ENCODE measurements at regions of chr18 and their contacts with region 1.

Region 1: GRCh38 chr18:77207540-77207939 is 42.1 kb upstream of the GALR1 start:
- DNase-seq: peak; percentile 53 to 69 (median 62)
- H3K4me3 ChIP-seq: no peak overlapping the region
- H3K4me3 Mint-ChIP-seq: no peak overlapping the region
- H3K27ac ChIP-seq: no peak overlapping the region
- H3K27ac Mint-ChIP-seq: peak overlapping the region; percentile 28 to 94 (median 64)
- H3K4me1 ChIP-seq: peaks cover 22 to 38% of the 10 kb centered on the region in 2 donors
- H3K4me1 Mint-ChIP-seq: peaks cover 44% of the 10 kb centered on the region
- H3K27me3 ChIP-seq: no peaks in the 10 kb centered on the region
- H3K27me3 Mint-ChIP-seq: peaks cover 0 to 2% (median 0%) of the 10 kb centered on the region in 3 donors
- CTCF ChIP-seq: peak; percentile 70

Region 2: DNA sequence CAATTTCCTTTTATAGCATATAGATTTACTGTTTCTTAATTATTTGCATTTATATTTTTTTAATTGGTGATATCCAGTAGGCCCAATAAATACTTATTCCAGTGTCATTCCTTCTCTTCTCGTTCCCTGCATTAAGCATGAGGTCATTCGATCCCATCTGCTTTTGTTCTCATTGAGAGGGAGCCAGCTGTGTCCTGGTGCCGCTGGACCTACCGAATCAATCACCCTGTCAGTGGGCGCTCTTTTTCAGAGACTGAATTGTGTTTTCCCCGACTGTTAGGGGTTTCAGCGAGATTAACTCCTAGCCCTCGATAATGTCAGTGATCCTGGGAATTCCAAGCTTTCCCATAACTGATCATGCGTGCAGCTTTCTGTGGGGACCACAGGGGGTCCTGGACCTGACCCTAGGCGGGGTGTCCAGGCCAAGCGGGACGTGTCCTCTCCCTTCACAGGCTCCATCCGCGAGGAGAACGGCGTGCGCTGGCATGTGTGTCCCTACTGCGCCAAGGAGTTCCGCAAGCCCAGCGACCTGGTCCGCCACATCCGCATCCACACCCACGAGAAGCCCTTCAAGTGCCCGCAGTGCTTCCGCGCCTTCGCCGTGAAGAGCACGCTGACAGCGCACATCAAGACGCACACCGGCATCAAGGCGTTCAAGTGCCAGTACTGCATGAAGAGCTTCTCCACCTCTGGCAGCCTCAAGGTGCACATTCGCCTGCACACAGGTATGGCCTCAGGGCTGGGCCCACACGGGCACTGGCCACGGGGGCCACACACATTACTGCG is 312.8 kb before region 1 on chr18:
- intact Hi-C with region 1: no loop called
- DNase-seq: no peak
- H3K4me3 ChIP-seq: no peak overlapping the region
- H3K4me3 Mint-ChIP-seq: no peak overlapping the region
- H3K27ac ChIP-seq: no peak overlapping the region
- H3K27ac Mint-ChIP-seq: no peak overlapping the region
- H3K4me1 ChIP-seq: no peaks in the 10 kb centered on the region
- H3K4me1 Mint-ChIP-seq: no peaks in the 10 kb centered on the region
- H3K27me3 ChIP-seq: no peaks in the 10 kb centered on the region
- H3K27me3 Mint-ChIP-seq: no peaks in the 10 kb centered on the region
- CTCF ChIP-seq: no peak

Region 3: GRCh38 chr18:77000527-77000926 is 207.0 kb before region 1 on chr18:
- intact Hi-C with region 1: loop called (anchors 5 kb)
- DNase-seq: peak; percentile 54 to 73 (median 67)
- H3K4me3 ChIP-seq: no peak overlapping the region
- H3K4me3 Mint-ChIP-seq: peak overlapping the region in 1 of 2 donors; percentile 35
- H3K27ac ChIP-seq: no peak overlapping the region
- H3K27ac Mint-ChIP-seq: peak overlapping the region in 4 of 7 donors; percentile 24 to 68 (median 44)
- H3K4me1 ChIP-seq: peaks cover 26 to 31% of the 10 kb centered on the region in 2 donors
- H3K4me1 Mint-ChIP-seq: peaks cover 27% of the 10 kb centered on the region
- H3K27me3 ChIP-seq: no peaks in the 10 kb centered on the region
- H3K27me3 Mint-ChIP-seq: no peaks in the 10 kb centered on the region
- CTCF ChIP-seq: peak; percentile 97

Region 4: DNA sequence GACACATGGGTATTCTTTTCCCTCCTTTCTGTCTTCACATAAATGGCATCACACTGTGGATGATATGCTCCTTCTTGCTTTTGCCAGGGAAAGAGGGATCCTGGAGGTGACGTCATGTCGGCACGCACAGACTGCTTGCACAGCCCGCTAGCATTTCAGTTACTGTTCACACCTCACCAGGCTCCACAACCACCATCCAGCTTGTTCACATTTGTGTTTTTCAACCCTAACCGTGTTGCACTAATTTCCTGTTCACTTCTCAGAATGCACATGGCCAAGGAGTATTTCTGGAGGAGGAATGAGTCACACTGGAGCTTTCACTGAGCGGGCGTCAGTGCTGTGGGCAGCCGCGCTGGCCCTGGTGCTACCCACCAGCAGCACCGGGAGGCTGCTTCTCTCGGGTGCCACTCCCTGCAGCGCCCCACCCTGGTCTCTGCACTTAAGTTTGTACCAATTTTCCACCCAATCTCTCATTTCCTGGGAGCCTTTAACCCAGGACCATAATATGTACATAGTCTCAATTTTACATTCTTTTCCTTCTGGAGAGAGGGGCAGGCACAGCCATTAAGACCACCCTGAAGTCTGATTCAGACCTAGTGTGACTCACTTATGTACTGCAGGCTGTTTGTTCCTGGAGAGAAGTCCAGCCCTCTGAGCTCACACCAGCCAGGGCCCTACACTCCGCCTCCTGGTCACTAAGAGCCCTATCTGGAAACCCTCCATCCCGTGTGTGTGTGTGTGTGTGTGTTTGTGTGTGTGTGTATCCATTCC is 140.1 kb before region 1 on chr18:
- intact Hi-C with region 1: loop called in 1 of 2 experiments (anchors 5 kb)
- DNase-seq: peak; percentile 89 to 93 (median 92)
- H3K4me3 ChIP-seq: no peak overlapping the region
- H3K4me3 Mint-ChIP-seq: peak overlapping the region; percentile 59 to 62
- H3K27ac ChIP-seq: peak overlapping the region; percentile 98 to 100
- H3K27ac Mint-ChIP-seq: peak overlapping the region; percentile 100
- H3K4me1 ChIP-seq: peaks cover 72% of the 10 kb centered on the region in 2 donors
- H3K4me1 Mint-ChIP-seq: peaks cover 89% of the 10 kb centered on the region
- H3K27me3 ChIP-seq: no peaks in the 10 kb centered on the region
- H3K27me3 Mint-ChIP-seq: no peaks in the 10 kb centered on the region
- CTCF ChIP-seq: no peak

Region 5: DNA sequence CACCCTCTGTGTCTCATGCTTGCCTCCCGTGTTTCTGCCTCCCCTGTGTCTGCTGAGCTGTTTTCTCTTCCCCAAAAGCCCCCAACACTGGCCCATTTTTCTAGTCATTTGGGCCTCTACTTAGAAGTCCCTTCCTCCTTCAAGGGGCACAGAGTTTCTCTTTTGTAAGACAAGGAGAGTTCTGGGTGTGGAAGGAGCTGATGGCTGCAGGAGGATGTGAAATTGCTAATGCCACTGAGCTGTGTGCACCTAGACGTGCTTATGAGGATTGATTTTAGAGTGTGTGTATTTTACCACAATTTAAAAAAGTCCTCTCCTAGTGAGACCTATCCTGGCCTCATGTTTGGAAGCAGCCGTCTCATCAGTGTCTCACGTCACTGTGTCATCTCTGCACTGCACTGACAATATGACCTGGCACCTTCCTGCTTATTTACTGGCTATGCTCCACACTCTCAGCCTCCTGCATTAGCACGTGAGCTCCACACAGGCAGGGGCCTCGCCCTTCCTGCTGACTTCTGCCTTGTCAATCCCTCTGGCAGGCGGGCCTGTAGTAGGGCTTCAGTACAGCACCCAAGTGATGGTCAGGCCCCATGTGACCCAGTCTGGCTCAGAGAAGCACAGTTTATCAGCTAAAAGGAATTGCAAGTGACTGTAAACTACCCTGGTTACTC is 67.0 kb before region 1 on chr18:
- intact Hi-C with region 1: loop called in 1 of 2 experiments (anchors 5 kb)
- DNase-seq: peak; percentile 85 to 95 (median 94)
- H3K4me3 ChIP-seq: no peak overlapping the region
- H3K4me3 Mint-ChIP-seq: peak overlapping the region in 1 of 2 donors; percentile 47
- H3K27ac ChIP-seq: peak overlapping the region; percentile 57 to 87
- H3K27ac Mint-ChIP-seq: peak overlapping the region; percentile 67 to 93 (median 85)
- H3K4me1 ChIP-seq: peaks cover 24 to 26% of the 10 kb centered on the region in 2 donors
- H3K4me1 Mint-ChIP-seq: peaks cover 27% of the 10 kb centered on the region
- H3K27me3 ChIP-seq: no peaks in the 10 kb centered on the region
- H3K27me3 Mint-ChIP-seq: peaks cover 0 to 4% (median 3%) of the 10 kb centered on the region in 3 donors
- CTCF ChIP-seq: no peak

Region 6: GRCh38 chr18:77177009-77177408 is 30.5 kb before region 1 on chr18:
- intact Hi-C with region 1: loop called in 1 of 2 experiments (anchors 5 kb)
- DNase-seq: no peak
- H3K4me3 ChIP-seq: no peak overlapping the region
- H3K4me3 Mint-ChIP-seq: no peak overlapping the region
- H3K27ac ChIP-seq: no peak overlapping the region
- H3K27ac Mint-ChIP-seq: no peak overlapping the region
- H3K4me1 ChIP-seq: peaks cover 9 to 14% of the 10 kb centered on the region in 2 donors
- H3K4me1 Mint-ChIP-seq: peaks cover 13% of the 10 kb centered on the region
- H3K27me3 ChIP-seq: no peaks in the 10 kb centered on the region
- H3K27me3 Mint-ChIP-seq: peaks cover 0 to 3% (median 2%) of the 10 kb centered on the region in 3 donors
- CTCF ChIP-seq: no peak

Region 7: GRCh38 chr18:77254711-77255405 is 47.3 kb after region 1 on chr18:
- intact Hi-C with region 1: no loop called
- DNase-seq: no peak
- H3K4me3 ChIP-seq: no peak overlapping the region
- H3K4me3 Mint-ChIP-seq: no peak overlapping the region
- H3K27ac ChIP-seq: no peak overlapping the region
- H3K27ac Mint-ChIP-seq: no peak overlapping the region
- H3K4me1 ChIP-seq: no peaks in the 10 kb centered on the region
- H3K4me1 Mint-ChIP-seq: peaks cover 2% of the 10 kb centered on the region
- H3K27me3 ChIP-seq: peaks cover 9 to 48% of the 10 kb centered on the region in 2 donors
- H3K27me3 Mint-ChIP-seq: peaks cover 28 to 61% (median 46%) of the 10 kb centered on the region in 3 donors
- CTCF ChIP-seq: no peak